HEK293 (cell line): ENCODE measurements at regions of chr6 and their contacts with region 1.

Region 1: DNA sequence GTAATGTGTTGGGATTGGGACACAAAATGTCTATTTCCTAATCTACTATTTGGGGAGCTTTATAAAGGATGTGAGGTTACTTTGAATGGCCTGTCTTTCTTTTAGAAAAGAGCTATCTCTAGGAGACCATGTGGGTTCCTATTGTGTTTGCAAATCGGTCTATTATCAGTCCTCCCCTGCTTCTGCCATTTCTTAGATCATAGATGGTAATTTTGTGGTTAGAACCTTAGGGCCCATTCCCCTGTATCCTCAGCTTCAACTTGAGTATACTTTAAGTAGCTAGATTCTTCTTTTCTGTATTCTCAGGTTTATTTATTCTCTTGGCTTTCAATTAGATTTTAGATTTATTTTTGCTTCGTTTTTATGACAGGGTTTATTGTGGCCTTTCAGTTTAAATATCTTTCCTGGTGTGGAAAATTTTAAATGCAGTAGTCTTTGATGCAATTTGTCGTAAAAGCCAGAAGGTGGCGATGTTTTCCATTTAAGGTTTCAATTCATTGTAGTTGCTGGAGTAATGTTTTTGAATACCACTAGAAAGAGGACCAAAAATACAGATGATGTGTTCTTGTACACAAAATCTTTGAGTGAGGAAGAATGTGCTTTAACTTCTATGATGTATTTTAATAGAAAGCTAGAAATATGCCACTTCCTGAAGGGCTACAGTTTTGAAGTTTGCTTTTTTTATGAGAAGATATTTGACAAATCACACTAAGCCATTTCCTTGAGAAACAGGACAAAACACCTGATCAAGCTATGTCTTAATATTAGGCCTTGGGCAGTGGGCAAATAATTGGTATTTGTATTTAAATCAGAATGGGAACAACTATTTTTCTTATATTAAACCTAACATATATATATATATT is 20.3 kb downstream of the TBPL1 start:
- H3K4me3 ChIP-seq: no peak overlapping the region
- H3K27ac ChIP-seq: 0 out of 2 replicates have a peak overlapping the region, but pooled peaks have one; percentile 13
- H3K4me1 ChIP-seq: peaks cover 21% of the 10 kb centered on the region
- CTCF ChIP-seq: peak; percentile 47; the same call in 1 of the 2 replicates

Region 2: GRCh38 chr6:133710826-133711225 is 262.5 kb before region 1 on chr6:
- CTCF ChIA-PET with region 1: no interaction called
- POLR2A ChIA-PET with region 1: no interaction called
- H3K4me3 ChIP-seq: no peak overlapping the region
- H3K27ac ChIP-seq: no peak overlapping the region
- H3K4me1 ChIP-seq: no peaks in the 10 kb centered on the region
- CTCF ChIP-seq: no peak

Region 3: GRCh38 chr6:133991096-133991593 is 17.8 kb after region 1 on chr6:
- CTCF ChIA-PET with region 1: interaction called, 66 read pairs
- POLR2A ChIA-PET with region 1: no interaction called
- H3K4me3 ChIP-seq: no peak overlapping the region
- H3K27ac ChIP-seq: no peak overlapping the region
- H3K4me1 ChIP-seq: peaks cover 12% of the 10 kb centered on the region
- CTCF ChIP-seq: no peak

Region 4: GRCh38 chr6:134031696-134032255 is 58.4 kb after region 1 on chr6:
- CTCF ChIA-PET with region 1: interaction called, 11 read pairs
- POLR2A ChIA-PET with region 1: no interaction called
- H3K4me3 ChIP-seq: no peak overlapping the region
- H3K27ac ChIP-seq: no peak overlapping the region
- H3K4me1 ChIP-seq: peaks cover 3% of the 10 kb centered on the region; the same call in 1 of the 2 replicates
- CTCF ChIP-seq: no peak

Region 5: GRCh38 chr6:134058622-134059366 is 85.5 kb after region 1 on chr6:
- CTCF ChIA-PET with region 1: interaction called, 304 read pairs
- POLR2A ChIA-PET with region 1: no interaction called
- H3K4me3 ChIP-seq: no peak overlapping the region
- H3K27ac ChIP-seq: no peak overlapping the region
- H3K4me1 ChIP-seq: no peaks in the 10 kb centered on the region; the same call in 1 of the 2 replicates
- CTCF ChIP-seq: no peak